ENCODE measurements at regions of chr9 and their contacts with region 1.

Region 1: DNA sequence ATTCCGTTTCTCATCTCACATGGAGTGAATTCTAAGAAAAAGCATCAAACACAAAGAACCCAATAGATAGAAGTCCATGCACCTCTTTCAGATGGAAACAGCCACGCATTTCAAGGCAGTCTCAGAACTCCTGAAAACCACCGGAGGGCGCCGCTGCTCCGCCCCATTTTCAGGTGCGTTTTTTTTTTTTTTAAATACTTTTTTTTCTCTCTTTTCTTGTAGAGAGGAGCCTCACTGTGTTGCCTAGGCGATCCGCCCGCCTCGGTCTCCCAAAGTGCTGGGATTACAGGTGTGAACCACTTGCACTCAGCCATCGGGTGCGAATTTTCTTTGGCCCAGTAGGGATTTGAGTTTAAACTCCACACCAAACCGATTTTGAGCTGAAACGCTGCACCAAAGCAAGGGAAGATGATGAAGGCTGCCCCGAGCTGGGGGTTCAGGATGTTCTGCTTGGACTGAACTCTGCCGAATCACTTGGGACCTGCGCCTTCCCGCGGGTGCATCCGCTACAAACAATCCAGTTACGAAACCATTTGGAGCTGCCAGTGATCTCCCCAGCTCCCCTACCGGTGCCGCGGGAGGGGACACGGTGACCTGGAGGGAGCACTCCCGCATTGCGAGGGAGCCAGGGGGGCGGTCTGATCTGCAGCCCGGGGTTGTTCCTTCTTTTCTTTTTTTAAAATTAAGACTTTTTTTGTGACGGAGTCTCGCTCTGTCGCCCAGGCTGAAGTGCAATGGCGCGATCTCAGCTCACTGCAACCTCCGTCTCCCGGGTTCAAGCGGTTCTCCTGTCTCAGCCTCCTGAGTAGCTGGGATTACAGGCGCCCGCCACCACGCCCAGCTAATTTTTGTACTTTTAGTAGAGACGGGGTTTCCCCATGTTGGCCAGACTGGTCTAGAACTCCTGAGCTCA is 1.4 kb downstream of the PTGR1 start:
- DNase-seq: peak; percentile 76
- H3K4me3 ChIP-seq: peak overlapping the region; percentile 63
- H3K27ac ChIP-seq: peak overlapping the region; percentile 81
- H3K4me1 ChIP-seq: no peaks in the 10 kb centered on the region
- H3K27me3 ChIP-seq: no peaks in the 10 kb centered on the region
- CTCF ChIP-seq: peak; percentile 76

Region 2: GRCh38 chr9:111691672-111692329 is 93.7 kb after region 1 on chr9:
- intact Hi-C with region 1: loop called (anchors 5 kb)
- DNase-seq: no peak
- H3K4me3 ChIP-seq: no peak overlapping the region
- H3K27ac ChIP-seq: no peak overlapping the region
- H3K4me1 ChIP-seq: no peaks in the 10 kb centered on the region
- H3K27me3 ChIP-seq: no peaks in the 10 kb centered on the region
- CTCF ChIP-seq: peak; percentile 19